Adrenal gland (tissue), 19 donors: ENCODE measurements at regions of chr3 and their contacts with region 1.

Region 1: DNA sequence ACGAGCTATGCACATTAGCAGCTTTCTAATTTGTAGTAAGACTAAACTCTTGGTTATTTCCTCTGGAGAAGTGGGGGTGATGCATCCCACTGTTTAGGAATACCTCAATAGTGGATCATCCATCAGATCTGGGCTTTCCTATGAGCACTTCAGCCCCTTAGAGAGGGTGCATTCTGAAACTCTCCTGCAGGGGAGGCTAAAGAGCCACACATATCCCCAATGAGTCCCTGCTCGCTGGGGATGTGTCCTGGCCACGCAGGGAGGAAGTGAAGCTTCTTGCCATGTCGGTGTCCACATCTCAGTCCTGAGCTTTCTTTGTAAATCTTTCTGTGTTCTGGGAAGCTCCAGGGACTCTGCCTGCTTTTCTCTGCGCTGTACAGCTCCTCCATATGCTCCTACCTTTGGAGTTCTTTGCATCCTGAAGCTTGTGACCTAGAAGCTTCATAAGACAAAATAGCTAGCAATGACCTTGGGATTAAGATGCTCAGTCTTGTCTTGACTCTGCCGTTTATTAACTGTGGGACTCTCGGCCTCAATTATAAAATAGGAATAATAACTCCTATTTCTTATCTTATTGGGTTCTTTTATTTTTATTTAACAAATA is 28.3 kb upstream of the MASP1 start:
- DNase-seq: peak; percentile 69 to 92 (median 78)
- H3K4me3 ChIP-seq: no peak overlapping the region
- H3K27ac ChIP-seq: no peak overlapping the region
- H3K4me1 ChIP-seq: peaks cover 0 to 11% of the 10 kb centered on the region in 2 donors
- H3K27me3 ChIP-seq: peaks cover 7% of the 10 kb centered on the region
- CTCF ChIP-seq: peak; percentile 80 to 97 (median 94)
- POLR2A ChIP-seq: peak in 1 of 2 donors; percentile 19

Region 2: DNA sequence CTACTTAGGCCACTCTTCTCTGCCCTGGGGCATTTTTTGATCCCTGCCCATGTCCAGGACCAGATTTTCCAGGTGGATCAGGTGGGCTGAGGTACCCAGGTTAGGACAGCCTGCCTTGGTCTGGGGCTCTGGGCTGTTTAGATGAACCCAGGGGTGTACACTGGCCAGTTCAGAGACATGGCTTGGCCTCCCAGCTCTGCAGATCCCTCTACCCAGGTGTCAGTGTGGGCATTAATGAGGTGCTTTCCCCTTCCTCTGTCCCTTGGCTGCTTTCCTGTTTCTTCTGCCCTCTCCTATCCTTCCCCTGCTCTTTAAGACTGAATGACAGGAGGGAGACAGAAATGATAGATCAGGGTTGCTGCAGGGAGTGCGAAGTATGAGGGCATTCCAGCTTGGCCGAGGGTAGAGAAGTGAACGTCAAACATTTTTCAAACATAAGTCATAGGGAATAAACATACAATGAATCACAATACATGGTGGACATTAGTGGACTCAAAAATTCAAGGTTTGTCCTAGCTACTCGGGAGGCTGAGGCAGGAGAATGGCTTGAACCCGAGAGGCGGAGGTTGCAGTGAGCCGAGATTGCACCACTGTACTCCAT is 92.0 kb before region 1 on chr3:
- intact Hi-C with region 1: loop called (anchors 5 to 10 kb)
- DNase-seq: no peak
- H3K4me3 ChIP-seq: no peak overlapping the region
- H3K27ac ChIP-seq: no peak overlapping the region
- H3K4me1 ChIP-seq: no peaks in the 10 kb centered on the region
- H3K27me3 ChIP-seq: no peaks in the 10 kb centered on the region
- CTCF ChIP-seq: no peak
- POLR2A ChIP-seq: no peak

Region 3: DNA sequence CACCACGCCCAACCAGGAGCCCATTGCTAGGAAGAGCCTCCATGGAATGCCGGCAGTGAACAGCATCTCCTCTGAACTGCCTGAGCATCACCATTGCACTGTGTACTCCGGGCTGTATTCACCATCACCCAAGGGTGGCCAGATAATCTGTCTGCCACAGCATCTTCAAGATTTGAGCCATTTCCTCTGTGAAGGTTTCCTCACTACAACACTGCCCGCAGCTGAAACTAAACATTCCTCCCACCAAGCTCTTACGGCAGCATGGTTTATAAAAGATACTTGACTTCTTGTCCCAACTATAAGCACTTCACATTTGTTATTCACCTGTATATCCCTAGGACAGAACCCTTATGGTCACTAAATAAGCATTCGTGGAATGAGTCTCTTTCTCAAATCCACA is 224.5 kb after region 1 on chr3:
- intact Hi-C with region 1: no loop called
- DNase-seq: no peak
- H3K4me3 ChIP-seq: no peak overlapping the region
- H3K27ac ChIP-seq: no peak overlapping the region
- H3K4me1 ChIP-seq: no peaks in the 10 kb centered on the region
- H3K27me3 ChIP-seq: peaks cover 5% of the 10 kb centered on the region
- CTCF ChIP-seq: no peak
- POLR2A ChIP-seq: no peak

Region 4: DNA sequence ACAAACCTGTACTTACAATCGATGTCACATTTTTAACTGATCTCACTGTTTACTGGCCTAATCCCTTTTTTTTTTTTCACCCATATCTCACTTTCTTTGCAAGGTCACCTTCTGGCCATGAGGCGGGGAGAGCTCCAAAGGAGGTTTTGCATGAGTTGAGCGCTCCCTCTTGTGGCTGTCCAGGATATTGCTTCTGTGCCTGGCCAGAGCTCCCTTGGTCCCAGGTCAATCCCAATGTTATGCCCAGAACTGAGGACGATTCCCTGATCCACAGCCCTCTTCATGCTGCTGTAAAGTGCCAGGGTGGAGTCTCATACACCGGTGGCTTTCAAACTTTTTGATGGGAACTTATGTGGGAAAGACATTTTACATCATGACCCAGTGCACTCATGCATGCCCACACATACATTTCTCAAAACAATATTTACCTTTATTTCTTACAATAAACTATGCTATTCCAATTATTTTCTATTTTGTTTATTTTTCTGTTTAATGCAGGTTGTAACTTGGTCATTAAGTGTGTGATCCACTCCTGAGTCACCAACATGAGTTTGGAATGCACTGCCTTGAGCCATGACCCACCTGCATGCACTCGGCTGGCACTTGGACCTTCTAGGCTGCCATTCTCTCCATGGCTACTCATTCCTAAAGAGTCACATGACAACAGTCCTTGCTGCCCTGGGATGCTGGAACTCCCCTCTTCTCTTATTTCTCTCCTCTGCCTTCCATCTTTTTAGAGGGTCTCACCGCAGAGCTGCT is 360.0 kb after region 1 on chr3:
- intact Hi-C with region 1: loop called (anchors 2 kb)
- DNase-seq: peak; percentile 81 to 95 (median 88)
- H3K4me3 ChIP-seq: no peak overlapping the region
- H3K27ac ChIP-seq: no peak overlapping the region
- H3K4me1 ChIP-seq: peaks cover 3 to 6% of the 10 kb centered on the region in 2 donors
- H3K27me3 ChIP-seq: no peaks in the 10 kb centered on the region
- CTCF ChIP-seq: peak; percentile 87 to 98 (median 94)
- POLR2A ChIP-seq: no peak

Region 5: GRCh38 chr3:187713504-187713903 is 393.7 kb after region 1 on chr3:
- intact Hi-C with region 1: loop called in 1 of 2 experiments (anchors 2 kb)
- DNase-seq: peak in 2 of 7 donors; percentile 46 to 67
- H3K4me3 ChIP-seq: peak overlapping the region in 1 of 4 donors; percentile 17
- H3K27ac ChIP-seq: no peak overlapping the region
- H3K4me1 ChIP-seq: peaks cover 4 to 17% of the 10 kb centered on the region in 2 donors
- H3K27me3 ChIP-seq: no peaks in the 10 kb centered on the region
- CTCF ChIP-seq: no peak
- POLR2A ChIP-seq: no peak